Endothelial cell of umbilical vein (primary cell): ENCODE measurements at regions of chr20 and their contacts with region 1.

Region 1: GRCh38 chr20:24917797-24918578 is 31.1 kb upstream of the CST7 start:
- DNase-seq: peak; percentile 55
- H3K4me3 ChIP-seq: no peak overlapping the region
- H3K27ac ChIP-seq: no peak overlapping the region
- H3K4me1 ChIP-seq: no peaks in the 10 kb centered on the region
- H3K27me3 ChIP-seq: no peaks in the 10 kb centered on the region
- CTCF ChIP-seq: peak; percentile 80 to 88
- POLR2A ChIP-seq: no peak

Region 2: GRCh38 chr20:23889775-23890211 is 1028.2 kb before region 1 on chr20:
- CTCF ChIA-PET with region 1: interaction called, 10 read pairs
- POLR2A ChIA-PET with region 1: no interaction called
- dilution Hi-C with region 1: no loop called
- intact Hi-C with region 1: no loop called
- DNase-seq: peak; percentile 42
- H3K4me3 ChIP-seq: no peak overlapping the region
- H3K27ac ChIP-seq: no peak overlapping the region
- H3K4me1 ChIP-seq: no peaks in the 10 kb centered on the region
- H3K27me3 ChIP-seq: no peaks in the 10 kb centered on the region
- CTCF ChIP-seq: peak; percentile 63 to 73
- POLR2A ChIP-seq: no peak

Region 3: DNA sequence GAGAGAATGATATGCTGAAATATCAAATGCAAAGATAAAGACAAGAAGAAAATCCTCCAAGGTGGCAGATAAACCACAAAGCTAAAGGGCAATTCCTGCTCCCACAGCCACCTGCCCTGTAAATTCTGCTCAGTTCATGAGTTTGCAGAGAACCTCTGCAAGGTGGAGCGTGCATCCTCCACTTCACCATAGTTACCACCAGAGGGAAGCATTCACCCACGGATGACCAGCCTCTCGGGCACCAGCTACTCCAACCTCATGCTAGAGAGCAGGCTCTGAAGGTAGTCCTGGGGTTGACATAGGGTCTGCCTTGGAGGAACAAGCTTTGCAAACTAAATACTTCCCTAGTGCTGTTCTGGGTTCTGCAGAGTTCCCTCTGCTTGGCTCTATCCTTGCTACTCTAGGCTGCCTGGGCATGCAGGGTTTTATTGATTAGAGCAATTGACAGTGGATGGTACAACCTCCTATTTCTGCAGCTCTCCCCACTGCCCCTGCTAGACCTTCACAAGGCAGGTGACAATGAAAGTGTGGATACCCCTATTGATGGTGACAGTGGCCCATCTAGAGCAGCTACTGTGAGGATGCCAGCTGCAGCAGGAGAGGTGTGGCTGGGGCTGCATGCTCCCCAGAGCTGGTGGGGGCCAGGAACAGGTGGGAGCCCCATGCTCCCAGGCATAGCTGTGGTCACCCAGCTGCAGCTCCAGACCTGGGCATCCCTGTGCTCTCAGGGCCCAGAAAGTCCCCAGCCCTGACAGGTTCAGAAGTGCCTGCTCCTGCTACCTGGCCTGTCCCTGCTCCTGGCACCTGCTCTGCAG is 980.5 kb before region 1 on chr20:
- CTCF ChIA-PET with region 1: interaction called, 120 read pairs
- POLR2A ChIA-PET with region 1: no interaction called
- dilution Hi-C with region 1: no loop called
- intact Hi-C with region 1: loop called (anchors 1 kb)
- DNase-seq: peak; percentile 60
- H3K4me3 ChIP-seq: no peak overlapping the region
- H3K27ac ChIP-seq: no peak overlapping the region
- H3K4me1 ChIP-seq: no peaks in the 10 kb centered on the region
- H3K27me3 ChIP-seq: no peaks in the 10 kb centered on the region
- CTCF ChIP-seq: peak; percentile 54 to 73
- POLR2A ChIP-seq: no peak

Region 4: DNA sequence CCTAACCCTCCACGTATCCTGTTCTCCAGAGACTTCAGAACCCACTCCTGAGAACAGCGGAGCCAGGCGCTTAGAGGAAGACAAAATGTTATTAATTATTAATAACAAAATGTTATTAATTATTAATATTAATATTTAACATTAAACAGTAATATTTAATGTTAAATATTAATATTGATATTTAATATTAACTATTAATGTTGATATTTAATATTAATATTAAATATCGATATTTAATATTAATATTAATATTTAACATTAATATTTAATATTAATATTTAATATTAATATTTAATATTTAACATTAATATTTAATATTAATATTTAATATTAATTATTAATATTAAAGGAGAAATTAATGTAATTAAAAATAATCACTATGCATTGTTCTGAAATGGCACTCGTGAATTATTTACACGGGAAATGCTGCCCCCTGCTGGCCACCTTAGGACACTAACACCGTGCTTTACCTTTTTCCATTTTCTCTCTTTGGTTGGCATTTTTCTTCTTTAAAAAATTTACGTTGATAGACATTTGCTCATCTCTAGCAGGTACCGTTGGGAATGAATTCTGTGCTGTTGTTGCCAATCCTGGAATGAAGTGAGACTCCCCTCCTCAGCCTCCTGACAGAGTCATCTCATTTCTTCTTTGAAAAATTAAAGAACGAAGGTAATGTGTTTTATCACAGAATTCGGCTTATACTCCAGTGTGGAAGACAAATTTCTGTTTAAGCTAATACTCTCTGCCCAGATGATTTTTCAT is 921.9 kb before region 1 on chr20:
- CTCF ChIA-PET with region 1: no interaction called
- POLR2A ChIA-PET with region 1: no interaction called
- dilution Hi-C with region 1: no loop called
- intact Hi-C with region 1: loop called (anchors 5 kb)
- DNase-seq: peak; percentile 24
- H3K4me3 ChIP-seq: no peak overlapping the region
- H3K27ac ChIP-seq: no peak overlapping the region
- H3K4me1 ChIP-seq: no peaks in the 10 kb centered on the region
- H3K27me3 ChIP-seq: peaks cover 2 to 6% of the 10 kb centered on the region in 2 experiments
- CTCF ChIP-seq: peak; percentile 55 to 59
- POLR2A ChIP-seq: no peak